GM18951 (cell line): ENCODE measurements at regions of chr4 and their contacts with region 1.

Region 1: GRCh38 chr4:78612398-78613178 is 61.0 kb downstream of the ANXA3 start:
- POLR2A ChIP-seq: no peak

Region 2: GRCh38 chr4:78775303-78776030 is 162.9 kb after region 1 on chr4:
- in situ Hi-C with region 1: loop called (anchors 10 kb)
- POLR2A ChIP-seq: no peak

Region 3: GRCh38 chr4:78864405-78865024 is 251.9 kb after region 1 on chr4:
- in situ Hi-C with region 1: loop called (anchors 10 kb)
- POLR2A ChIP-seq: no peak